Left lung (tissue), 14 donors: ENCODE measurements at regions of chr1 and their contacts with region 1.

Region 1: GRCh38 chr1:6889875-6890480 is 104.7 kb downstream of the CAMTA1 start:
- DNase-seq: peak in 2 of 4 donors; percentile 31 to 69
- ATAC-seq: peak; percentile 96
- H3K4me3 ChIP-seq: no peak overlapping the region
- H3K27ac ChIP-seq: no peak overlapping the region
- H3K4me1 ChIP-seq: no peaks in the 10 kb centered on the region
- H3K27me3 ChIP-seq: no peaks in the 10 kb centered on the region
- CTCF ChIP-seq: peak; percentile 76 to 84

Region 2: GRCh38 chr1:6602669-6603237 is 287.2 kb before region 1 on chr1 and contains the start of gene KLHL21:
- intact Hi-C with region 1: no loop called
- DNase-seq: peak; percentile 83 to 98 (median 92)
- ATAC-seq: peak; percentile 80
- H3K4me3 ChIP-seq: peak within 1 kb of the TSS; percentile 52 to 92
- H3K27ac ChIP-seq: peak within 1 kb of the TSS; percentile 99
- H3K4me1 ChIP-seq: peaks cover 23 to 54% of the 10 kb centered on the region in 2 donors
- H3K27me3 ChIP-seq: no peaks in the 10 kb centered on the region
- CTCF ChIP-seq: no peak
- polyA plus RNA-seq, gene KLHL21: 11.0 to 15.9 (median 13.6) TPM

Region 3: DNA sequence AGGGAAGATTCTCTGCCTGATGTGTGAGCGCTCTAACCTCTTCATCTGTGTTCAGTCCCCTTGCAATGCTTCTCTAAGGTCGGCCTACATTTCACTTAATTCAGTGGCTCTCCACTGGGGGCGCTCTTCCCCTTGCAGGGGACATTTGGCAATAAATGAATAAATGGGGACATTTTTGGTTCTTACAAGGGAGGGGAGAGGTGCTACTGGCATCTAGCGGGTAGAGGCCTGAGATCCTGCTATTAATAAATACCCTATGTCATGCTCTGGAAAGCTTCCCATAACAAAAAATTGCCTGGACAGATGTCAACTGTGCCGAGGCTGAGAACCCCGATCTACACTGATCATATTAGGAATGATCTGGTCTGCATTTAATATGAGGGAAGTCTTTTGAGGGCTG is 162.4 kb before region 1 on chr1:
- intact Hi-C with region 1: loop called in 1 of 2 experiments (anchors 10 kb)
- DNase-seq: peak in 1 of 4 donors; percentile 18
- ATAC-seq: peak; percentile 79
- H3K4me3 ChIP-seq: no peak overlapping the region
- H3K27ac ChIP-seq: no peak overlapping the region
- H3K4me1 ChIP-seq: no peaks in the 10 kb centered on the region
- H3K27me3 ChIP-seq: peaks cover 0 to 13% of the 10 kb centered on the region in 2 donors
- CTCF ChIP-seq: peak; percentile 70 to 77

Region 4: GRCh38 chr1:6801966-6802365 is 88.0 kb before region 1 on chr1:
- intact Hi-C with region 1: loop called in 1 of 2 experiments (anchors 10 kb)
- DNase-seq: no peak
- ATAC-seq: peak; percentile 63
- H3K4me3 ChIP-seq: no peak overlapping the region
- H3K27ac ChIP-seq: peak overlapping the region in 1 of 2 donors; percentile 60
- H3K4me1 ChIP-seq: peaks cover 16 to 31% of the 10 kb centered on the region in 2 donors
- H3K27me3 ChIP-seq: no peaks in the 10 kb centered on the region
- CTCF ChIP-seq: no peak